ENCODE measurements at regions of chr17 and their contacts with region 1.

Region 1: GRCh38 chr17:82292251-82293154 is 19.0 kb upstream of the CSNK1D start:
- DNase-seq: peak; percentile 93 to 100 (median 95)

Region 2: GRCh38 chr17:82273327-82274133 is 19.0 kb before region 1 on chr17 and contains the start of gene CSNK1D:
- intact Hi-C with region 1: loop called (anchors 1 kb)
- DNase-seq: peak; percentile 83 to 99 (median 92)